Endothelial cell of umbilical vein (primary cell): ENCODE measurements at regions of chr19 and their contacts with region 1.

Region 1: DNA sequence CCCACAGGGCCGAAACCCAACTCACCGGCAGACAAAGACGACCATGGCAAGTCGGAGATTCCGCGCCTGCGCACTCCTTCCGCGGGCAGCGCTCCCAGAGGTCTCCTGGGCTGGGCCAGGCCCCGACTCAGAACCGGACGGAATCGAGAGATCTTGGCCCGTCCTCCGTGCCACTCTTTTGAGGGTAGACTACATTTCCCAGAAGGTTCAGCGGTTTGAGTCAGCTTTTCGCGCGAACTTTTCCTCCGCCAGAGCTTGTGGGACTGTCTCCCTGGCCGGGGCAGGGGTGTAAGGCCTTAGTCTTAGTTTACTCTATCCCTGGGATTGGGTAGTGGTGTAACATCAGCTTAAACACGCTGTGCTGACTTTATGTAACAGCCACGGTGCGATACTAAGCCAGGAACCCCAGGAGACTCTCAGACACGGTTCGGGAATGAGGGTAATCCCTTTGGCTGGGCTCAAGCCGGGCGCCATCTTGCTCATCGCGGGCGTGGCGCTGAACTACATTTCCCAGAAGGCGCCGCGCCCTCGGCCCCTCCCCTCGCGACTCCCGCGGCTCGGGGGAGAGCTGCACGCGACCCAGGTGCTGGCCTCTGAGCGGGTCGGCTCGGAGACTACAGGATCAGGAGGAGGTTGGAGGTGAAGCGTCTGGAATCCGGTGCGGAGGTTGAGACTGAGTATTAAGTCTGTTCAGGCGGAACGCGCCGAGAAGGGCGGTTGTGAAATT is at the start of gene ZNF260:
- DNase-seq: peak; percentile 98
- H3K4me3 ChIP-seq: peak within 1 kb of the TSS; percentile 40 to 91 (median 50)
- H3K27ac ChIP-seq: peak within 1 kb of the TSS; percentile 65
- H3K4me1 ChIP-seq: peaks cover 9% of the 10 kb centered on the region
- H3K27me3 ChIP-seq: no peaks in the 10 kb centered on the region
- CTCF ChIP-seq: no peak
- POLR2A ChIP-seq: peak; percentile 86
- total RNA-seq, gene ZNF260: 10.5 and 13.9 TPM in 2 replicates

Region 2: GRCh38 chr19:36489118-36489919 is 39.0 kb before region 1 on chr19 and contains the start of gene ZNF566:
- CTCF ChIA-PET with region 1: interaction called, 3 read pairs
- POLR2A ChIA-PET with region 1: interaction called, 3 read pairs
- dilution Hi-C with region 1: no loop called
- intact Hi-C with region 1: loop called (anchors 1 kb)
- DNase-seq: peak; percentile 97
- H3K4me3 ChIP-seq: peak within 1 kb of the TSS; percentile 51 to 80 (median 77)
- H3K27ac ChIP-seq: peak within 1 kb of the TSS; percentile 85
- H3K4me1 ChIP-seq: peaks cover 8% of the 10 kb centered on the region
- H3K27me3 ChIP-seq: no peaks in the 10 kb centered on the region
- CTCF ChIP-seq: peak in 1 of 2 donors; percentile 10
- POLR2A ChIP-seq: no peak
- total RNA-seq, gene ZNF566: 8.3 and 8.5 TPM in 2 replicates

Region 3: DNA sequence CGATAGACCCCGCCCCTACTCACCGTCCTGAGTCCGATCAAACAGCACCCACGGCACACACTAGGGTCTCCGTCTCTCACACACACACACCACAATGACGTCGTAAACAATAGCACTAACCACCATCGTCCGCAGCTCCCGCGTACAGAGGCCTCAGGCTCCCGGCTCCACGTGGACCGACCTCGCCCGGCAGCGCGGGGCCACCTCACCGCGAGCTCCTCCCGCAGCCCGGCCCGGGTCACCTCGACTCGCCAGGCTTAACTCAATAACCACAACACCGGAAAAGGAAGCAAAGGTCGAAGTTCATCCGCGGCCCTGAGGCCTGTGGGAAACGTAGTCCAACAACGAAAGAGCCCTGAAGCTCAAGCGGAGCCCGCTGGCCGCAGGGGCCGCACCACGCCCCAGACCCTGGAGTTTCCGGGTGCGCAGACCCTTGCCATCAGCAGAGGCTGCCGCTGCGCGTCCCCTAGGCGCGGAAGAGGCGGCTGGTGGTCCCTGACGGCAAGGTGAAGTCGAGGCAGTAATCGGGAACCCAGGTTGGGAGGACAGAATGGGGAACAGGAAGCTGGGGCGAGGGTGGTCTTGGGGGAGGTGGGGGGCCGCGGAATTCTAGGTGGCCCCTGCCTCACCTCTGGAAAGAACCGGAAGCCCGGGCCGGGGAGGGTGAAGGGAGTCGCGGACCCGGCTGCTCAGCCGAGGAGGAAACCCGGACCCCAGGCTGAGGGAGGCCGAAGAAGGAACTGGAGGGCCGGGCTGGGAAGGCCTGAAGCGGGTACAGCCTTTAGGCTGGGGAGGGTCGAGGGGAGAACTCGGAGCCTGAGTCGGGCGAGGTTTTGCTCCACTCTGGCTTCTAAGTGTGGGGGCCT is 44.9 kb after region 1 on chr19 and contains the start of gene ZNF529:
- CTCF ChIA-PET with region 1: interaction called, 5 read pairs
- POLR2A ChIA-PET with region 1: interaction called, 5 read pairs
- dilution Hi-C with region 1: no loop called
- intact Hi-C with region 1: loop called (anchors 1 kb)
- DNase-seq: peak; percentile 94
- H3K4me3 ChIP-seq: peak within 1 kb of the TSS; percentile 3 to 78 (median 57)
- H3K27ac ChIP-seq: peak within 1 kb of the TSS; percentile 22
- H3K4me1 ChIP-seq: peaks cover 8% of the 10 kb centered on the region
- H3K27me3 ChIP-seq: no peaks in the 10 kb centered on the region
- CTCF ChIP-seq: no peak
- POLR2A ChIP-seq: peak; percentile 73
- total RNA-seq, gene ZNF529: 5.3 and 8.4 TPM in 2 replicates

Region 4: DNA sequence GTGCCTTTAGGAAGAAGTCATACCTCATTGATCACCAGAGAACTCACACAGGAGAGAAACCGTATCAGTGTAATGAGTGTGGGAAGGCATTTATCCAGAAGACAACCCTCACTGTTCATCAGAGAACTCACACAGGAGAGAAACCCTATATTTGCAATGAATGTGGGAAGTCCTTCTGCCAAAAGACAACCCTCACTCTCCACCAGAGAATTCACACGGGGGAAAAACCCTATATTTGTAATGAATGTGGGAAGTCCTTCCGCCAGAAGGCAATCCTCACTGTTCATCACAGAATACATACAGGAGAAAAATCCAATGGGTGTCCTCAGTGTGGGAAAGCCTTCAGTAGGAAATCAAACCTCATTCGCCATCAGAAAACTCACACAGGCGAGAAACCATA is 98.7 kb after region 1 on chr19:
- CTCF ChIA-PET with region 1: no interaction called
- POLR2A ChIA-PET with region 1: no interaction called
- dilution Hi-C with region 1: no loop called
- intact Hi-C with region 1: no loop called
- DNase-seq: no peak
- H3K4me3 ChIP-seq: no peak overlapping the region
- H3K27ac ChIP-seq: no peak overlapping the region
- H3K4me1 ChIP-seq: no peaks in the 10 kb centered on the region
- H3K27me3 ChIP-seq: no peaks in the 10 kb centered on the region
- CTCF ChIP-seq: no peak
- POLR2A ChIP-seq: no peak

Region 5: GRCh38 chr19:36665832-36666231 is 137.5 kb after region 1 on chr19:
- CTCF ChIA-PET with region 1: no interaction called
- POLR2A ChIA-PET with region 1: no interaction called
- dilution Hi-C with region 1: no loop called
- intact Hi-C with region 1: loop called (anchors 2 kb)
- DNase-seq: no peak
- H3K4me3 ChIP-seq: peak overlapping the region; percentile 58 to 94 (median 86)
- H3K27ac ChIP-seq: no peak overlapping the region
- H3K4me1 ChIP-seq: no peaks in the 10 kb centered on the region
- H3K27me3 ChIP-seq: no peaks in the 10 kb centered on the region
- CTCF ChIP-seq: no peak
- POLR2A ChIP-seq: no peak

Region 6: GRCh38 chr19:36745870-36746269 is 217.5 kb after region 1 on chr19:
- CTCF ChIA-PET with region 1: no interaction called
- POLR2A ChIA-PET with region 1: no interaction called
- dilution Hi-C with region 1: no loop called
- intact Hi-C with region 1: no loop called
- DNase-seq: no peak
- H3K4me3 ChIP-seq: no peak overlapping the region
- H3K27ac ChIP-seq: no peak overlapping the region
- H3K4me1 ChIP-seq: no peaks in the 10 kb centered on the region
- H3K27me3 ChIP-seq: no peaks in the 10 kb centered on the region
- CTCF ChIP-seq: no peak
- POLR2A ChIP-seq: no peak

Region 7: GRCh38 chr19:36772311-36773222 is 244.2 kb after region 1 on chr19 and contains the start of gene ZNF850:
- CTCF ChIA-PET with region 1: no interaction called
- POLR2A ChIA-PET with region 1: no interaction called
- dilution Hi-C with region 1: no loop called
- intact Hi-C with region 1: loop called (anchors 1 kb)
- DNase-seq: peak; percentile 92
- H3K4me3 ChIP-seq: peak within 1 kb of the TSS; percentile 31 to 76 (median 40)
- H3K27ac ChIP-seq: peak within 1 kb of the TSS; percentile 33
- H3K4me1 ChIP-seq: peaks cover 11% of the 10 kb centered on the region
- H3K27me3 ChIP-seq: no peaks in the 10 kb centered on the region
- CTCF ChIP-seq: no peak
- POLR2A ChIP-seq: no peak
- total RNA-seq, gene ZNF850: 3.6 and 4.5 TPM in 2 replicates

Region 8: GRCh38 chr19:36850559-36851442 is 322.4 kb after region 1 on chr19 and contains the start of gene ZNF345:
- CTCF ChIA-PET with region 1: no interaction called
- POLR2A ChIA-PET with region 1: interaction called, 4 read pairs
- dilution Hi-C with region 1: no loop called
- intact Hi-C with region 1: loop called (anchors 1 kb)
- DNase-seq: peak; percentile 95
- H3K4me3 ChIP-seq: peak within 1 kb of the TSS; percentile 49 to 75 (median 72)
- H3K27ac ChIP-seq: peak within 1 kb of the TSS; percentile 83
- H3K4me1 ChIP-seq: peaks cover 10% of the 10 kb centered on the region
- H3K27me3 ChIP-seq: no peaks in the 10 kb centered on the region
- CTCF ChIP-seq: no peak
- POLR2A ChIP-seq: peak; percentile 44
- total RNA-seq, gene ZNF345: 3.4 and 3.8 TPM in 2 replicates

Region 9: GRCh38 chr19:37077934-37078725 is 549.8 kb after region 1 on chr19 and contains the start of gene ZNF420:
- CTCF ChIA-PET with region 1: no interaction called
- POLR2A ChIA-PET with region 1: no interaction called
- dilution Hi-C with region 1: no loop called
- intact Hi-C with region 1: loop called (anchors 10 kb)
- DNase-seq: peak; percentile 94
- H3K4me3 ChIP-seq: peak within 1 kb of the TSS; percentile 66 to 80 (median 77)
- H3K27ac ChIP-seq: peak within 1 kb of the TSS; percentile 28
- H3K4me1 ChIP-seq: peaks cover 9% of the 10 kb centered on the region
- H3K27me3 ChIP-seq: no peaks in the 10 kb centered on the region
- CTCF ChIP-seq: no peak
- POLR2A ChIP-seq: peak; percentile 64
- total RNA-seq, gene ZNF420: 4.2 and 5.3 TPM in 2 replicates